Thyroid gland (tissue), 4 donors: ENCODE measurements at regions of chr15 and their contacts with region 1.

Region 1: GRCh38 chr15:72671535-72671934 is 14.4 kb downstream of the HIGD2B start:
- DNase-seq: no peak
- H3K4me3 ChIP-seq: no peak overlapping the region
- H3K27ac ChIP-seq: no peak overlapping the region
- H3K4me1 ChIP-seq: peaks cover 0 to 4% of the 10 kb centered on the region in 2 donors
- H3K27me3 ChIP-seq: no peaks in the 10 kb centered on the region
- CTCF ChIP-seq: no peak
- POLR2A ChIP-seq: no peak

Region 2: GRCh38 chr15:72599855-72600464 is 71.6 kb before region 1 on chr15:
- intact Hi-C with region 1: loop called (anchors 5 kb)
- DNase-seq: peak; percentile 29 to 50
- H3K4me3 ChIP-seq: no peak overlapping the region
- H3K27ac ChIP-seq: no peak overlapping the region
- H3K4me1 ChIP-seq: no peaks in the 10 kb centered on the region
- H3K27me3 ChIP-seq: no peaks in the 10 kb centered on the region
- CTCF ChIP-seq: peak; percentile 29 to 74 (median 65)
- POLR2A ChIP-seq: no peak

Region 3: DNA sequence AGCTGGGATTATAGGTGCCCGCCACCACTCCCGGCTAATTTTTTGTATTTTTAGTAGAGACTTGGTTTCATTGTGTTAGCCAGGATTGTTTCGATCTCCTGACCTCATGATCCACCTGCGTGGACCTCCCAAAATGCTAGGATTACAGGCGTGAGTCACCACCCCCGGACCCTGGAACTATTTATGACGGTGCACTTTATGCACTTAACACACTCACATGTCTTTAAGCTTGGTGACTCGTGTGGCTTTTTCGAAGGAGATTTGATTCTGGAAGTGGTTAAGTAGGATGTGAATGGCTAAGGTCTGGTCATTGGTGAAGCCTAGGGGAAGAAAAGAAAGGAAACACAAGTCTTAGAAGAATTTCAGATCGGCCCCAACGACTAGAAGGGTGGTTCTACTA is 34.7 kb after region 1 on chr15:
- intact Hi-C with region 1: no loop called
- DNase-seq: no peak
- H3K4me3 ChIP-seq: no peak overlapping the region
- H3K27ac ChIP-seq: no peak overlapping the region
- H3K4me1 ChIP-seq: peaks cover 0 to 3% of the 10 kb centered on the region in 2 donors
- H3K27me3 ChIP-seq: no peaks in the 10 kb centered on the region
- CTCF ChIP-seq: no peak
- POLR2A ChIP-seq: no peak